Spleen (tissue), 13 donors: ENCODE measurements at regions of chr22 and their contacts with region 1.

Region 1: DNA sequence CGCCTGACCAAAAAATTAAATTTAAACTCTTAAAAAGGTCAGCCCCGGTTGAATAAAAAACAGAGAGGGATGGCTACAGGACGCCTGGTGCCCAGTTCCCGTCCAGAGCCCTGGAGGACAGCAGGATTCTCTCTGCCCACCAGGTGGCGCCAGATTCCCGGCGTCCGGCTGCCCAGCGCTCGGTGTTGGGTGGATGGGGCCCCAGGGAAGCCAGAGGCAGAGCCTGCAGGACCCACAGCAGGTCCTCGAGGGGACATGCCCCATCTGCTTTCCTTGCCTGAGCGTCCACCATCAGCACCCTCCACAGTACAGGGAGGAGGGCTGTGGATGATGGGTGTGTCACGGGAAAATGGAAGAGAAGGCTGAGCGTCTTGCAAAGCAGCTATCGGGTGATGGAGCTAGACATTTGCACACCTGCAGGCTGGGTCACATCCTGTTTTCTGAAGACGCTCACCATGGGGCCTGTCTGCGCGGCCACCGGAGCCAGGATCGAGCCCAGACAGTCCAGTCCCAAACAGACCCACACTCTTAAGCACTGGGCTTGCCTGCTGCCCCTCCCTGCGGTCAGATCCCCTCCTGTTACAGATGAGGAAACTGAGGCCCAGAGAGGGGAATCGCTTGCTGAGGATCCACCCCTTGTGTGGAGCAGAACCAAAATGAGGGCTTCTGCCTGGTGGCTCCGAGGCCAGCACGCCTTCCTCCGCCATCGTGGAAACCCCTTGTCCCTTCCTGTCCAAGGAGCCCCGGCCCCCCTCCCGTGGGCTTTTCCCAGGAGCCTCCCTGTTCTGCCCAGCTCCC is 18.5 kb upstream of the CBX7 start:
- DNase-seq: peak; percentile 97
- H3K4me3 ChIP-seq: peak overlapping the region in 5 of 8 donors; percentile 4 to 61 (median 18)
- H3K27ac ChIP-seq: peak overlapping the region in 4 of 8 donors; percentile 28 to 65 (median 50)
- H3K4me1 ChIP-seq: peaks cover 30 to 58% (median 55%) of the 10 kb centered on the region in 6 donors
- H3K27me3 ChIP-seq: peaks cover 0 to 8% (median 0%) of the 10 kb centered on the region in 7 donors
- CTCF ChIP-seq: peak; percentile 94 to 99 (median 97)
- POLR2A ChIP-seq: no peak

Region 2: DNA sequence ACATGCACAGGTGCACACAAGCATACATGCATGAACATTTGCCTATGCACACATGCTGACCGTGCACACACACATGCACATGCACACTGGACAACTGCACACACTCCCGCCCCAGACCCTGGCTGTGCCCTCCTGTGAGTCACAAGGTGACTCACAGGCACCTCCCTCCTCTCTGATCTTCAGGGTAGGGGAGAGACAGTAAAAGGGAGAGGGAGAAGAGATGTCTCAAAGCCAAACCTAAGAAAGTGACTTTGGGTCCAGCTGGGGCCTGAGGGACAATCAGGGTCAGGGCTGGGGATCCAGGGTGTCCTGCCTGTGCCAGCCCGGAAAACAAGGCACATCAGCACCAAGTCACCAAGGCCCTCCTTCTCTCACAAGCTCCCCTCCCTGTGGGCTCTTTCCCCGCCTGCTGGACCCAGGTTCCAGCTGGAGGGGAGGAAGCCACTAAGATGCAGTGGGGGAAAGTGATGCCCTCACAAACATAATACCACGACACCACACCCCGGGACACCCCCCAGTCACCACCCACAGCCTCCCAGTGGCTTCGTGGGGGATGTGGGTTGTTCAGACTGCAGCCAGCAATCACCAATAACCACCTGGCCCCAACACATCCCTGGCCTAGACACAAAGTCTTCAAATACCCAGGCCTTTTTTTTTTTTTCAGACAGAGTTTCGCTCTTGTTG is 34.5 kb after region 1 on chr22:
- intact Hi-C with region 1: no loop called
- DNase-seq: peak; percentile 67
- H3K4me3 ChIP-seq: no peak overlapping the region
- H3K27ac ChIP-seq: no peak overlapping the region
- H3K4me1 ChIP-seq: peaks cover 0 to 13% (median 5%) of the 10 kb centered on the region in 6 donors
- H3K27me3 ChIP-seq: peaks cover 0 to 4% (median 0%) of the 10 kb centered on the region in 7 donors
- CTCF ChIP-seq: no peak
- POLR2A ChIP-seq: no peak

Region 3: GRCh38 chr22:39236321-39237317 is 65.6 kb after region 1 on chr22:
- intact Hi-C with region 1: loop called (anchors 2 kb)
- DNase-seq: no peak
- H3K4me3 ChIP-seq: peak overlapping the region in 1 of 8 donors; percentile 0
- H3K27ac ChIP-seq: peak overlapping the region in 2 of 8 donors; percentile 15 to 63
- H3K4me1 ChIP-seq: peaks cover 45 to 89% (median 64%) of the 10 kb centered on the region in 6 donors
- H3K27me3 ChIP-seq: peaks cover 0 to 97% (median 32%) of the 10 kb centered on the region in 7 donors
- CTCF ChIP-seq: no peak
- POLR2A ChIP-seq: no peak

Region 4: GRCh38 chr22:39306581-39307361 is 135.7 kb after region 1 on chr22:
- intact Hi-C with region 1: loop called (anchors 2 kb)
- DNase-seq: peak; percentile 77
- H3K4me3 ChIP-seq: no peak overlapping the region
- H3K27ac ChIP-seq: no peak overlapping the region
- H3K4me1 ChIP-seq: peaks cover 4 to 50% (median 33%) of the 10 kb centered on the region in 6 donors
- H3K27me3 ChIP-seq: no peaks in the 10 kb centered on the region
- CTCF ChIP-seq: peak in 7 of 11 experiments; percentile 12 to 68 (median 49)
- POLR2A ChIP-seq: no peak

Region 5: GRCh38 chr22:39519681-39520053 is 348.6 kb after region 1 on chr22:
- intact Hi-C with region 1: loop called (anchors 10 kb)
- DNase-seq: no peak
- H3K4me3 ChIP-seq: peak overlapping the region; percentile 82 to 100 (median 100)
- H3K27ac ChIP-seq: peak overlapping the region; percentile 96 to 99 (median 98)
- H3K4me1 ChIP-seq: peaks cover 32 to 75% (median 57%) of the 10 kb centered on the region in 6 donors
- H3K27me3 ChIP-seq: no peaks in the 10 kb centered on the region
- CTCF ChIP-seq: peak in 6 of 11 experiments; percentile 18 to 60 (median 30)
- POLR2A ChIP-seq: peak in 1 of 3 donors; percentile 44